Activated CD8-positive, alpha-beta T cell treated with anti-CD3 and anti-CD28 coated beads for 36 hours (primary cell): ENCODE measurements at regions of chr6 and their contacts with region 1.

Region 1: GRCh38 chr6:10722820-10723566 is at the start of gene TMEM14C:
- DNase-seq: peak; percentile 93
- ATAC-seq: peak; percentile 93
- H3K4me3 Mint-ChIP-seq: peak within 1 kb of the TSS; percentile 91
- H3K27ac Mint-ChIP-seq: peak within 1 kb of the TSS; percentile 92
- H3K4me1 Mint-ChIP-seq: peaks cover 45% of the 10 kb centered on the region
- H3K27me3 Mint-ChIP-seq: no peaks in the 10 kb centered on the region
- CTCF ChIP-seq: no peak
- total RNA-seq, gene TMEM14C: 60.1 to 62.0 TPM

Region 2: GRCh38 chr6:10747251-10747972 is 24.4 kb after region 1 on chr6 and contains the start of gene TMEM14B:
- CTCF ChIA-PET with region 1: interaction called, 3 read pairs
- POLR2A ChIA-PET with region 1: interaction called, 20 read pairs
- intact Hi-C with region 1: no loop called
- DNase-seq: peak; percentile 100
- ATAC-seq: peak; percentile 99
- H3K4me3 Mint-ChIP-seq: peak within 1 kb of the TSS; percentile 95
- H3K27ac Mint-ChIP-seq: peak within 1 kb of the TSS; percentile 95
- H3K4me1 Mint-ChIP-seq: peaks cover 42% of the 10 kb centered on the region
- H3K27me3 Mint-ChIP-seq: no peaks in the 10 kb centered on the region
- CTCF ChIP-seq: no peak
- total RNA-seq, gene TMEM14B: 92.1 to 94.2 TPM